IMR-90 (cell line): ENCODE measurements at regions of chrX and their contacts with region 1.

Region 1: DNA sequence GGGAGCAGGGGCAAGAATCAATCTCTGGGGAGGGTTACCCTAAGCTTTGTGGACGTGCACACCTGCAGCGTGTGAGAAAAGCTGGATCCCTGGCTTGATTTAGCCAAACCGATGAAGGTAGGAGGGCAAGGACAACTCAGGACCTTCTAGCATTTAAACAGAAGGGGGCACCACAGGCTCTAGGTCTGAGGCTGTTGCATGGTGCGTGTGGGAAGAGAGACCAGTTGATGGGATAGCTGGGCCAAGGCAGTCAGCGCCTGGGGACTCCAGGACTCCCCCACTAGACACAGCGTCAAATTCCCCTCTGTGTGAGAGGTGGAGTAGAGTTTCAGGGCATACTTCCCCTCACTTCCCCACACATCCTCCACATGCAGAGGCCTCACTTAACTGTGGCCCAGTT is 4.3 kb downstream of the GABRQ start:
- DNase-seq: peak; percentile 1
- ATAC-seq: no peak
- H3K4me3 ChIP-seq: no peak overlapping the region
- H3K27ac ChIP-seq: no peak overlapping the region
- H3K4me1 ChIP-seq: no peaks in the 10 kb centered on the region
- H3K27me3 ChIP-seq: no peaks in the 10 kb centered on the region; the same call in 1 of the 2 replicates
- CTCF ChIP-seq: no peak; the same call in 1 of the 2 replicates
- POLR2A ChIP-seq: no peak
- RAD21 ChIP-seq: no peak

Region 2: GRCh38 chrX:152821145-152821765 is 179.3 kb after region 1 on chrX:
- CTCF ChIA-PET with region 1: no interaction called
- POLR2A ChIA-PET with region 1: no interaction called
- dilution Hi-C with region 1: no loop called
- in situ Hi-C with region 1: no loop called
- intact Hi-C with region 1: loop called (anchors 5 kb)
- DNase-seq: peak; percentile 32
- ATAC-seq: peak; percentile 38; the same call in 1 of the 2 replicates
- H3K4me3 ChIP-seq: no peak overlapping the region
- H3K27ac ChIP-seq: no peak overlapping the region
- H3K4me1 ChIP-seq: peaks cover 4% of the 10 kb centered on the region; the same call in 1 of the 2 replicates
- H3K27me3 ChIP-seq: no peaks in the 10 kb centered on the region
- CTCF ChIP-seq: peak; percentile 51
- POLR2A ChIP-seq: no peak
- RAD21 ChIP-seq: peak; percentile 36; the same call in 1 of the 2 replicates

Region 3: GRCh38 chrX:152926279-152926678 is 284.3 kb after region 1 on chrX:
- CTCF ChIA-PET with region 1: no interaction called
- POLR2A ChIA-PET with region 1: no interaction called
- dilution Hi-C with region 1: no loop called
- in situ Hi-C with region 1: no loop called
- intact Hi-C with region 1: loop called (anchors 5 kb)
- DNase-seq: peak; percentile 70
- ATAC-seq: peak; percentile 91
- H3K4me3 ChIP-seq: no peak overlapping the region
- H3K27ac ChIP-seq: no peak overlapping the region
- H3K4me1 ChIP-seq: peaks cover 2% of the 10 kb centered on the region; the same call in 1 of the 2 replicates
- H3K27me3 ChIP-seq: peaks cover 2% of the 10 kb centered on the region; the same call in 1 of the 2 replicates
- CTCF ChIP-seq: peak; percentile 63
- POLR2A ChIP-seq: no peak
- RAD21 ChIP-seq: peak; percentile 65

Region 4: DNA sequence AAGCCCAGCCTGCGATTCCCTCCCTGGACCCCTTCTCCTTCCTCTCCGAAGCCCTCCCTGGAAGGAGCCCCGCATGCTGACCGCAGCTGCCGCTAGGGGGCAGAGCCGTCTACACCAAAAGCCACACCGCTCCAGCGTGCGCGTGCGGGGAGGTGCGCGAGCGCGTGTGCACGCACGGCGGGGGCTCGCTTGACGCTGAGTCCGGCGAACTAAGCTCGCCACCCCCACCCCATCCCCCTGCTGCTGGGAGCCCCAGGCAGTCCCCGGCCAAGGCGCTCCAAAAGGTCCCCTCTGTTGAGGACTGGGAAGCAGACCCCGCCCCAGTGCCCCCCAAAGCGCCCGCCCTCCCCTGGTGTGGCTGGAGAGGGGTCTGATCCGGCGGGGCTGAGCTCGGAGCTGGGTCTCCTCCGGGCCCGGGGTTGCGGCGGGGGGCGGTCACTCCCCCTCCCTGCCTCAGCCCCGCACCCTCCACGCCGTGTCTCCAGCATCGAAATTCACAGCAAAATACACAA is 968.0 kb after region 1 on chrX:
- CTCF ChIA-PET with region 1: no interaction called
- POLR2A ChIA-PET with region 1: no interaction called
- dilution Hi-C with region 1: no loop called
- in situ Hi-C with region 1: no loop called
- intact Hi-C with region 1: no loop called
- DNase-seq: peak; percentile 65
- ATAC-seq: peak; percentile 90
- H3K4me3 ChIP-seq: peak overlapping the region; percentile 24; the same call in 1 of the 2 replicates
- H3K27ac ChIP-seq: no peak overlapping the region
- H3K4me1 ChIP-seq: no peaks in the 10 kb centered on the region
- H3K27me3 ChIP-seq: peaks cover 16% of the 10 kb centered on the region
- CTCF ChIP-seq: peak; percentile 69
- POLR2A ChIP-seq: no peak
- RAD21 ChIP-seq: peak; percentile 59